ENCODE measurements at regions of chr13 and their contacts with region 1.

Region 1: DNA sequence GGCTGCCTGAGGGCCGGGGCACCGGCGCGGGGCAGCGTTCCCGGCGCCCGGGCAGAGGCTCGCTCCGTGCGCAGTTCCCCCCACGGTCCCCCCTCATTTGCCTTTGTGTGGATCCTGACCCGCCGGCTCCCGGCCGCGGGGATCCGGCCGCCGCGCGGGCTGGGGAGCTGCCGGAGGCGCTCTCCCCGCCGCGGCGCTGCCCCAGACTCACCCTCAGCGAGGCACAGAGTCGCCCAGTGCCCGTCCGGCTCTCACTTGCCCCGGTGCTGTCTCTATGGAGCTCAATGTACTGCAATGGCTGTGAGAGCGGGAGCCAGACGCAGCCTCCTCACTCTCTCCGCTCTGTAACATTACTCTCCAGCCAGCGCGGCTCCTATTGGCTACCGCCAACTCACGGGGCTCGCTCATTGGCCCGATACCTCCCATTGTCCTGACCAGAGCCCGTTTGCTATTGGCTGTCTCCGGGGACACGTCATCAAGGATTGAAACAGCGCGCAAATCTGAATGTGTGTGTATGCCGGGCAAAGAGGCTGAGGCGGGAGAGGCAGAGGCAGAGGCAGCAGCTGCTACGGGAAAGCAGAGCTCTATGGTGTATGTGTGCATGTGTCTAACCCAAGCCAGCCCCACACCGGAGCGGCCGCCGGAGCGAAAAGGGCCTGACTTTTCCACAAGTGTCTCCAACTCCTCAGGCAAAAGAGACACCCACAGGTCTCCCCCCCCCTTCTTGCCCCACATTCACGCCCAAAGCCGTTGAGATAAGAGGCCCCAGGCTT is at the start of gene HMGB1:
- DNase-seq: peak; percentile 99
- total RNA-seq, gene HMGB1: 153 TPM

Region 2: GRCh38 chr13:30132623-30133553 is 332.9 kb before region 1 on chr13:
- intact Hi-C with region 1: loop called (anchors 2 kb)
- DNase-seq: peak; percentile 97

Region 3: GRCh38 chr13:30408319-30409101 is 57.3 kb before region 1 on chr13:
- intact Hi-C with region 1: loop called (anchors 1 kb)
- DNase-seq: peak; percentile 97

Region 4: GRCh38 chr13:30561511-30561910 is 95.7 kb after region 1 on chr13:
- intact Hi-C with region 1: no loop called
- DNase-seq: no peak

Region 5: DNA sequence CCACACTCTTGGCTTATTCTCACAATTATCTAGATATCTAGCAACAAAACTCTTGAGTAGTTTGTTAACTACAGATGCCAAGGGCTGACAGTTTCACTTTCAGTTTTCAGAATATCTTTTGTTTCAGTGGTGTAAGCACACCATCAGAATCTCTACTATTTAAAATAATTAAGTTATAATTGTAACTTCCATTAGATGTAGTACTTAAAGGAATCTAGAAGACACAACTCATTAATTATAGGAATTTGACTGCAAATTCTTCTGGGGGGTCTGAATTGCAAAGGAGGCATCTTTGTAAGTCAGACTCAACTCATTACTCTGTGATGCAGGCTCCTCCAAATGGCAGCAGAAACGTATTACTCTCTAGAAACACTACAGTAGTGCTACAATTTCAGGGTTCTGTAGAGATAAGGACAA is 107.1 kb after region 1 on chr13:
- intact Hi-C with region 1: loop called (anchors 1 kb)
- DNase-seq: no peak

Region 6: GRCh38 chr13:30673669-30674521 is 208.1 kb after region 1 on chr13:
- intact Hi-C with region 1: loop called (anchors 10 kb)
- DNase-seq: peak; percentile 95